Caco-2 (cell line): ENCODE measurements at regions of chr19 and their contacts with region 1.

Region 1: GRCh38 chr19:41310033-41310758 is at the start of gene CCDC97:
- DNase-seq: peak; percentile 86 to 90
- H3K4me3 ChIP-seq: peak within 1 kb of the TSS; percentile 64
- H3K4me3 Mint-ChIP-seq: peak within 1 kb of the TSS; percentile 92
- H3K27ac Mint-ChIP-seq: peak within 1 kb of the TSS; percentile 95
- H3K4me1 ChIP-seq: peaks cover 17% of the 10 kb centered on the region
- H3K4me1 Mint-ChIP-seq: peaks cover 7% of the 10 kb centered on the region
- H3K27me3 ChIP-seq: no peaks in the 10 kb centered on the region
- H3K27me3 Mint-ChIP-seq: no peaks in the 10 kb centered on the region
- CTCF ChIP-seq: no peak
- total RNA-seq, gene CCDC97: 47.1 and 47.8 TPM in 2 replicates

Region 2: DNA sequence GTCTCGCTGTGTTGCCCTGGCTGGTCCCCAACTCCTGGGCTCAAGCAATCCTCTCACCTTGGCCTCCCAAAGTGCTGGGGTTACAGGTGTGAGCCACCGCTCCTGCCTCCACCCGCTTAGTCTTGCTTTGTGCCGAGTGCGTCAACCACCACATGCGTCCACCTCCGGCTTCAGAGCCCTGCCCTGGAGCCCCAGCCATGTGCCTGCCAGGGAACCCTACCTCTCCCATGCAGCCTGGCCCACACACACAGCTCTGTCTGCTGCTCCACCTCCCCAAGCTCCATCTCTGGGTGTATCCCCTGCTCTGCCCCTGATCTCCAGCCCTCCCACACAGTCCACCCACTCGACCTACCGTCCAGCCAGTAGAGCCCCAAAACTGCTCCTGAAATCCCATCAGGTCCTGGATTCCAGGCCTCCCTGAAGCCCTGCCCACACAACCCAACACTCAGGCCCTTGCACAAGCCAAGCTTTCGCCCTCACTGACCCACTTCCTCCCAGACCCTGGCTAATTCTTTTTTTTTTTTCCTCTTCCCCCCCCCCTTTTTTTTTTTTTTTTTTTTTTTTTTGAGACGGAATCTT is 186.4 kb before region 1 on chr19:
- CTCF ChIA-PET with region 1: no interaction called
- POLR2A ChIA-PET with region 1: no interaction called
- intact Hi-C with region 1: loop called (anchors 2 kb)
- DNase-seq: no peak
- H3K4me3 ChIP-seq: no peak overlapping the region
- H3K4me3 Mint-ChIP-seq: no peak overlapping the region
- H3K27ac Mint-ChIP-seq: no peak overlapping the region
- H3K4me1 ChIP-seq: no peaks in the 10 kb centered on the region
- H3K4me1 Mint-ChIP-seq: peaks cover 7% of the 10 kb centered on the region
- H3K27me3 ChIP-seq: no peaks in the 10 kb centered on the region
- H3K27me3 Mint-ChIP-seq: no peaks in the 10 kb centered on the region
- CTCF ChIP-seq: no peak

Region 3: DNA sequence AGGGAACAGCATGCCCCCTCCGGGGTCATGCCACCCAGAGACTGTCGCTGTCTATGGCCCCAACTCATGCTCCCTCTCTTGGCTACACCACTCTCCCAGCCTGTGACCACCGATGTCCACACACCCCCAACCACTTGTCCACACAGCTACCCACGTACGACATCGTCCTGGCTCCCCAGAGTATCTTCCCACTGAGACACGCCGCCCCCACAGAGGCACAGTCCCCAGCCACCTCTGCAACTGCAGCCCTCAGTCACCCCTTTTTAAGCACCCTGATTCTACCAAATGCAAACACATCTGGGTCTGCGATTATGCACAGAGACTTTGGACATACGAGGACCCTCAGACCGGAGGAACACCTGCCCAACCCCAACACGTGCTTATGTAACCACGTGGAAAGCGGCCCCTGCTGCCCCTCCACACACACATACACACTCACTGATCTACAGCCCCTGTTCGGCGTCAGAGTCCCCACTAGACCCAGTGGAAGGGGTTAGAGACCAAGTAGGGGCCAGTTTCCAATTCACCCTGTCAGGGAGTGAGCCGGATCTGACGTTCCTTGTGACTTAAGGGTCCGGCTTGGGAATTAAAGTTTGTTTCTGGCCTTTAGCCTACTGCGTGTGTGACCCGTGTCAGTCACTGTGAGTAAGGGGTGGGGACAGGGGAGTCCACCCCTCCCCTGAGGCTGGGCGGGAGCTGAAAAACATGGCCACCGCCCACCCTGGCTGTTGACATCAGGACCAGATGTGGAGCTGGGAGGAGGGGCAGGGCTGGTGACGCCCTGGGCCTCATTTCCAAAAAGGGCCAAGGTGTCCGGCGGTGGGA is 103.1 kb before region 1 on chr19:
- CTCF ChIA-PET with region 1: interaction called, 3 read pairs
- POLR2A ChIA-PET with region 1: no interaction called
- intact Hi-C with region 1: loop called (anchors 1 kb)
- DNase-seq: no peak
- H3K4me3 ChIP-seq: no peak overlapping the region
- H3K4me3 Mint-ChIP-seq: no peak overlapping the region
- H3K27ac Mint-ChIP-seq: no peak overlapping the region
- H3K4me1 ChIP-seq: no peaks in the 10 kb centered on the region
- H3K4me1 Mint-ChIP-seq: peaks cover 6% of the 10 kb centered on the region
- H3K27me3 ChIP-seq: no peaks in the 10 kb centered on the region
- H3K27me3 Mint-ChIP-seq: no peaks in the 10 kb centered on the region
- CTCF ChIP-seq: no peak

Region 4: GRCh38 chr19:41353466-41354342 is 43.5 kb after region 1 on chr19 and contains the start of gene TGFB1:
- CTCF ChIA-PET with region 1: interaction called, 5 read pairs
- POLR2A ChIA-PET with region 1: no interaction called
- intact Hi-C with region 1: loop called (anchors 1 kb)
- DNase-seq: peak; percentile 77 to 87
- H3K4me3 ChIP-seq: peak within 1 kb of the TSS; percentile 73
- H3K4me3 Mint-ChIP-seq: peak within 1 kb of the TSS; percentile 83
- H3K27ac Mint-ChIP-seq: peak within 1 kb of the TSS; percentile 23
- H3K4me1 ChIP-seq: peaks cover 4% of the 10 kb centered on the region; the same call in 1 of the 2 replicates
- H3K4me1 Mint-ChIP-seq: peaks cover 24% of the 10 kb centered on the region
- H3K27me3 ChIP-seq: no peaks in the 10 kb centered on the region; the same call in 1 of the 2 replicates
- H3K27me3 Mint-ChIP-seq: peaks cover 11% of the 10 kb centered on the region
- CTCF ChIP-seq: peak; percentile 96
- total RNA-seq, gene TGFB1: 15.0 and 15.3 TPM in 2 replicates